ENCODE measurements at regions of chr12 and their contacts with region 1.

Region 1: DNA sequence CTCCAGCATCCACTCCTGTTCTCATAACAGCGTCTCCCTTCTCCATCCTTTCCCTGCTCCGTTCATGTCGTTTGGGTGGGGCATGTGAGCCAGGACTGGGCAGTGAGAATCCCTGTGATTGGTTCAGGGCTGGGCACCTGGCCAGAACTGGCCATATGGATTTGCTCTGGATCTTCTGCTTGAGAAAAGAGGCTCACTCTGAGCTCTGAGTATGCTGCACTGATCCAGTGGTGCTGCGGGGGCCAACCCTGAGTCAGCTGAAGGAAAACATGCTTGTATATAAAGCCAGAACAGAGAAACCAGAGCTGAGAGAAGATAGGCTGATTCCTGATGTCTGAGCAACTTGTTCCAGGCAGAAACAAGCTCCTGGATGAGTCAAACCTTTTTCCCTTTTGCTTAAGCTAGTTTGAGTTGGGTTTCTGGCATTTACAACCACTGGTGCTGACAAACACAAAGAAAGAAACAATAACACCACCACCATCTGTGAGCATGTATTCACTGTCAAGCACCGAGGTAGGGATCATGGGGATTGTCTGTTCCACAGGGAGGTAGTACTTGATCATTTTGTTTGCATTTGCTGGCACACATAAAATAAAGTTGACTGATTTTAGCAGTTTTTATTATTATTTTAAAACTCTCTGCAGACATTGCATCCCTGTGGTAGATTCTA is 14.0 kb upstream of the HPD start:
- DNase-seq: no peak
- ATAC-seq: no peak
- H3K4me3 ChIP-seq: no peak overlapping the region
- H3K27ac ChIP-seq: peak overlapping the region; percentile 26
- H3K4me1 ChIP-seq: peaks cover 29% of the 10 kb centered on the region
- H3K27me3 ChIP-seq: no peaks in the 10 kb centered on the region
- CTCF ChIP-seq: no peak
- EP300 ChIP-seq: no peak
- POLR2A ChIP-seq: no peak
- RAD21 ChIP-seq: no peak

Region 2: GRCh38 chr12:121858662-121859572 is 13.8 kb before region 1 on chr12 and contains the start of gene HPD:
- CTCF ChIA-PET with region 1: no interaction called
- POLR2A ChIA-PET with region 1: interaction called, 52 read pairs
- in situ Hi-C with region 1: no loop called
- intact Hi-C with region 1: loop called (anchors 2 kb)
- DNase-seq: peak; percentile 91
- ATAC-seq: peak; percentile 70
- H3K4me3 ChIP-seq: peak within 1 kb of the TSS; percentile 58 to 78 (median 60)
- H3K27ac ChIP-seq: peak within 1 kb of the TSS; percentile 100
- H3K4me1 ChIP-seq: peaks cover 76% of the 10 kb centered on the region
- H3K27me3 ChIP-seq: no peaks in the 10 kb centered on the region; a peak in 1 of 5 replicates
- CTCF ChIP-seq: peak; percentile 63
- EP300 ChIP-seq: peak in 1 of 2 experiments; percentile 33; a peak in 1 of 4 replicates
- POLR2A ChIP-seq: peak; percentile 73 to 83
- RAD21 ChIP-seq: peak; percentile 61
- total RNA-seq, gene HPD: 120 and 138 TPM in 2 replicates

Measured in HepG2 (cell line).